ENCODE measurements at regions of chr10 and their contacts with region 1.

Region 1: GRCh38 chr10:22228943-22229801 is 11.4 kb upstream of the EBLN1 start:
- DNase-seq: peak; percentile 95
- H3K4me3 ChIP-seq: peak overlapping the region; percentile 62
- H3K27ac ChIP-seq: peak overlapping the region; percentile 85
- H3K4me1 ChIP-seq: peaks cover 14% of the 10 kb centered on the region
- H3K27me3 ChIP-seq: no peaks in the 10 kb centered on the region
- CTCF ChIP-seq: no peak

Region 2: GRCh38 chr10:22003079-22003913 is 225.9 kb before region 1 on chr10 and contains the start of gene DNAJC1:
- CTCF ChIA-PET with region 1: no interaction called
- POLR2A ChIA-PET with region 1: no interaction called
- intact Hi-C with region 1: loop called (anchors 10 kb)
- DNase-seq: peak; percentile 98
- H3K4me3 ChIP-seq: peak within 1 kb of the TSS; percentile 88
- H3K27ac ChIP-seq: peak within 1 kb of the TSS; percentile 85
- H3K4me1 ChIP-seq: peaks cover 16% of the 10 kb centered on the region
- H3K27me3 ChIP-seq: no peaks in the 10 kb centered on the region
- CTCF ChIP-seq: no peak; the same call in 1 of the 2 replicates
- total RNA-seq, gene DNAJC1: 17.4 and 21.2 TPM in 2 replicates

Region 3: DNA sequence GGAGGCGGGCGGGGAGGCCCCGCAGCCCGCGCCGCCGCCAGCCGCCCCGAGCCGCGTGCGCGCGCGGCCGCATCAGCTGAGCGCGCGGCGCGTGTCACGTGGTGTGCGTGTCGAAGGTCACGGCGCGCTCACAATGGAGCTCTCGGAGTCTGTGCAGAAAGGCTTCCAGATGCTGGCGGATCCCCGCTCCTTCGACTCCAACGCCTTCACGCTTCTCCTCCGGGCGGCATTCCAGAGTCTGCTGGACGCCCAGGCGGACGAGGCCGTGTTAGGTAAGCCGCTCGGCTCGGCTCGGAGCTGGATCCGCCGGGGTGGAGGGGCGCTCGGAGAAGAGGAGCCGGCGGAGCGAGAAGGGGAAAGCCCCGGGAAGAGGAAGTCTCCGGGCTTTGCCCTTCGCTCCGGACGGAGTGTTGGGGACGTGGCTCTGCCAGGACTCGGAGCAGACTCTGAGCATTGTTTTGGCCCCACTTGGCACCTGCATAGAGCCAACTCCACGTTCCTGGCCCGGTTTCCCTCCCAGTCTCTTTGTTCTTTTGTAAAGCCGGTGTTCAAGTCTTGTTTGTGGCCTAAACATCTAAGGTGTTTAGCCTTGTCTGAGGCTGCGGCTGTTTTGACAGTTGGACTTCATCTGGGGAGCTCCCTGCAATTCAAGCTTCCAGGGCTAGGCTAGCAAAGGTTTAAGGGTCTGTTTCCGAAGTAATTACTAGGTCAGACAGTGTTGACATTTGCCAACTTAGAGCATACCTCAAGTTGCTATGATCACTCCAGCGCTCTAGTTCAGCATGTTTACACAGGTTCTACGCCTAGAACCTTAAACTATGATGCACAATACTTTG is 87.3 kb after region 1 on chr10 and contains the start of gene COMMD3:
- CTCF ChIA-PET with region 1: no interaction called
- POLR2A ChIA-PET with region 1: no interaction called
- intact Hi-C with region 1: loop called (anchors 5 kb)
- DNase-seq: peak; percentile 92
- H3K4me3 ChIP-seq: peak within 1 kb of the TSS; percentile 88
- H3K27ac ChIP-seq: peak within 1 kb of the TSS; percentile 90
- H3K4me1 ChIP-seq: peaks cover 20% of the 10 kb centered on the region
- H3K27me3 ChIP-seq: no peaks in the 10 kb centered on the region
- CTCF ChIP-seq: no peak
- total RNA-seq, gene COMMD3: 66.0 and 72.6 TPM in 2 replicates

Region 4: GRCh38 chr10:22427890-22428571 is 198.9 kb after region 1 on chr10:
- CTCF ChIA-PET with region 1: no interaction called
- POLR2A ChIA-PET with region 1: no interaction called
- intact Hi-C with region 1: loop called (anchors 10 kb)
- DNase-seq: peak; percentile 90
- H3K4me3 ChIP-seq: peak overlapping the region; percentile 3
- H3K27ac ChIP-seq: no peak overlapping the region
- H3K4me1 ChIP-seq: peaks cover 26% of the 10 kb centered on the region
- H3K27me3 ChIP-seq: no peaks in the 10 kb centered on the region
- CTCF ChIP-seq: no peak

Measured in A673 (cell line).